Panc1 (cell line): ENCODE measurements at regions of chr12 and their contacts with region 1.

Region 1: GRCh38 chr12:122593910-122594309 is 66.9 kb downstream of the KNTC1 start:
- DNase-seq: no peak
- ATAC-seq: no peak
- H3K4me3 ChIP-seq: no peak overlapping the region
- H3K27ac ChIP-seq: no peak overlapping the region
- H3K4me1 ChIP-seq: no peaks in the 10 kb centered on the region
- H3K27me3 ChIP-seq: no peaks in the 10 kb centered on the region
- CTCF ChIP-seq: no peak

Region 2: DNA sequence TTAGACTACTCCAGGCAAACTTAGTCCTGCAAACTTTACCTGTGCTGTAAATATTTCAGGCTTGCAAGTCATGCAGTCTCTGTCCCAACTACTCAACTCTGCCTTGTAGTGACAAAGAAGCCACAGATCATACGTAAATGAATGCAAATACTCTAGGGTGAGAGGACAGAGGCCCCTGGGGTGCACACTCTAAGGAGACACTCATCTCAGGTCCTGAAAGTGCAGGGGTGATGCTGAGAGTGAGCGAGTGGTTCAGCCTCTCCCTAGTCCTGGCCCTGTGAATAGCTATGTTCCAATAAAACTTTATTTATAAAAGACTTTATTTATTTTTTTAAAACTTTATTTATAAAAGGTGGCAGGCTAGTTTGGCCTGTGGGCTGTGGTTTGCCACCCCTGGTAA is 74.4 kb after region 1 on chr12:
- CTCF ChIA-PET with region 1: no interaction called
- POLR2A ChIA-PET with region 1: interaction called, 12 read pairs
- in situ Hi-C with region 1: no loop called
- intact Hi-C with region 1: no loop called
- DNase-seq: no peak
- ATAC-seq: 0 out of 2 replicates have a peak, but pooled peaks have one; percentile 51
- H3K4me3 ChIP-seq: no peak overlapping the region
- H3K27ac ChIP-seq: no peak overlapping the region
- H3K4me1 ChIP-seq: no peaks in the 10 kb centered on the region
- H3K27me3 ChIP-seq: no peaks in the 10 kb centered on the region
- CTCF ChIP-seq: no peak

Region 3: GRCh38 chr12:122937622-122938091 is 343.7 kb after region 1 on chr12:
- CTCF ChIA-PET with region 1: no interaction called
- POLR2A ChIA-PET with region 1: no interaction called
- in situ Hi-C with region 1: no loop called
- intact Hi-C with region 1: no loop called
- DNase-seq: no peak
- ATAC-seq: no peak
- H3K4me3 ChIP-seq: no peak overlapping the region
- H3K27ac ChIP-seq: no peak overlapping the region
- H3K4me1 ChIP-seq: peaks cover 3% of the 10 kb centered on the region; the same call in 1 of the 2 replicates
- H3K27me3 ChIP-seq: no peaks in the 10 kb centered on the region
- CTCF ChIP-seq: no peak